CD8-positive, alpha-beta memory T cell (primary cell): ENCODE measurements at regions of chr11 and their contacts with region 1.

Region 1: GRCh38 chr11:67239783-67240575 is 26.3 kb upstream of the GRK2 start:
- DNase-seq: peak; percentile 94 to 98 (median 97)
- H3K4me3 ChIP-seq: peak overlapping the region; percentile 98
- H3K4me3 Mint-ChIP-seq: peak overlapping the region; percentile 94 to 100 (median 99)
- H3K27ac ChIP-seq: peak overlapping the region; percentile 99
- H3K27ac Mint-ChIP-seq: peak overlapping the region; percentile 97 to 100 (median 99)
- H3K4me1 ChIP-seq: peaks cover 48% of the 10 kb centered on the region
- H3K4me1 Mint-ChIP-seq: peaks cover 50 to 58% (median 57%) of the 10 kb centered on the region in 3 donors
- H3K27me3 ChIP-seq: no peaks in the 10 kb centered on the region
- H3K27me3 Mint-ChIP-seq: peaks cover 0 to 4% of the 10 kb centered on the region in 2 donors

Region 2: DNA sequence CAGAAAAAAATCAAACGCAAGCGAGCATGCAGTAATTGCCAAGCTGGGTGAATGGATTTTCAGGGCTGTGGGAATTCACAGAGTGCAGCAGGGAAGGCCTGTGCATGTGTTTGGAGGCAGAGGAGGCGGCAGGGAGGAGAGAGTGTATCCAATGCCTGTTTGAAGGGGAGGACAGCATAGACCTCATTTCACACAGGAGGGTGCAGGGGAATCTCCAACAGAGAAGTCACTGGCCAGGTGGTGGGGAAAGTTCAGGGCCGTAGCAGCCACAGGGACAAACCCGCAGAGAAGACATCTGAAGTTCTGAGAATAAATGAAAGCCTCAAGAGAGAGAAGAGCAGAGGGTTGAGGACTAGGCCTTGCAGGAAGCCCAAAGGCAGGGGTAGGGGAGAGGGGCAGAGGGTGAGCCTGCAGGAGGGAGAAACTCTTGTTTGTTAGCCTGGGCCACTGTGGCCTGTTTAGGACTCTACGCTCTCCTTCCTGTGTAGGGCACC is 140.1 kb before region 1 on chr11:
- CTCF ChIA-PET with region 1: no interaction called
- POLR2A ChIA-PET with region 1: no interaction called
- DNase-seq: no peak
- H3K4me3 ChIP-seq: no peak overlapping the region
- H3K4me3 Mint-ChIP-seq: no peak overlapping the region
- H3K27ac ChIP-seq: no peak overlapping the region
- H3K27ac Mint-ChIP-seq: peak overlapping the region; percentile 35 to 86 (median 60)
- H3K4me1 ChIP-seq: peaks cover 14% of the 10 kb centered on the region
- H3K4me1 Mint-ChIP-seq: peaks cover 13 to 22% (median 16%) of the 10 kb centered on the region in 3 donors
- H3K27me3 ChIP-seq: no peaks in the 10 kb centered on the region
- H3K27me3 Mint-ChIP-seq: no peaks in the 10 kb centered on the region

Region 3: DNA sequence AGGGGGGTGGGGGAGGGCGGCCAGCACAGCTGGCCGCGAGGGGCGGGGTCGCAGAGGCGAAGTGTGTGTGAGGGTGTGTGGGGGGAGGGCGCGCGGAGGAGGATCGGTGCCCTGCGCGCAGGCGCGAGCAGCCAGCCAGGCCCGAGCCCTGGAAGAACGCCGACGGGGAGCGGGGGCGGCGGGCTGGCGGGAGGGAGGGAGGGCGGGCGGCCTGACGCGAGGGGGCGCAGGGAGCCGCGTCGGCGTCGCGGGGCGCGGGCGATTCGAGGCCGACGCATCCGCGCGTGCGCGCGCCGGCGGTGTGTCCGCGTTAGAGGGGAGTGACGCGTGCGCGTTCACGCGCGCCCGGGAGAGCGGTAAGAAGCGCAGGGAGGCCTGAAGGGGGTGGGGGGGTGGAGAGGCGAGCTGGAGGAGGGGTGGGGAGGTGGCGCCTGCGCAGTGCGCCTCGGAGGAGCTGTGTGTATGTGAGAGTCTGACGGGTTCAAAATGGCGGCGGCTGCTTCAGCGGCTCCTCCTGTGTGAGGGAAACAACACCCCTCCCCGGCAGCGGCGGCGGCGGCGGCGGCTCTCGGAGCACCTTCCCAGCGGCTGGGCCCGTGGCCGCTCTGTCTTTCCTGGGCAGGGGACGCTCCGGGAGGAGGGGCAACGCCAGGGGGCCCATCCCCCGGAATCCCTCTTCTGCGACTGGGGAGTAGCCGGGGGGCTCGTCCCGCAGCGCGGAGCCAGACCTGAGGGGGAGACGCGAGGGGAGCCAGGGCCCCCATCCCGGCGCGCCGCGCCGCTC is 121.0 kb before region 1 on chr11 and contains the start of gene KDM2A:
- CTCF ChIA-PET with region 1: interaction called, 8 read pairs
- POLR2A ChIA-PET with region 1: interaction called, 18 read pairs
- DNase-seq: peak; percentile 97 to 100 (median 99)
- H3K4me3 ChIP-seq: peak within 1 kb of the TSS; percentile 94
- H3K4me3 Mint-ChIP-seq: peak within 1 kb of the TSS; percentile 91 to 99 (median 97)
- H3K27ac ChIP-seq: peak within 1 kb of the TSS; percentile 78
- H3K27ac Mint-ChIP-seq: peak within 1 kb of the TSS; percentile 82 to 98 (median 96)
- H3K4me1 ChIP-seq: peaks cover 23% of the 10 kb centered on the region
- H3K4me1 Mint-ChIP-seq: peaks cover 25 to 49% (median 35%) of the 10 kb centered on the region in 3 donors
- H3K27me3 ChIP-seq: no peaks in the 10 kb centered on the region
- H3K27me3 Mint-ChIP-seq: no peaks in the 10 kb centered on the region
- total RNA-seq, gene KDM2A: 101 to 107 TPM

Region 4: GRCh38 chr11:67136156-67136555 is 103.8 kb before region 1 on chr11:
- CTCF ChIA-PET with region 1: no interaction called
- POLR2A ChIA-PET with region 1: no interaction called
- DNase-seq: no peak
- H3K4me3 ChIP-seq: no peak overlapping the region
- H3K4me3 Mint-ChIP-seq: no peak overlapping the region
- H3K27ac ChIP-seq: no peak overlapping the region
- H3K27ac Mint-ChIP-seq: peak overlapping the region in 2 of 8 donors; percentile 8 to 35
- H3K4me1 ChIP-seq: no peaks in the 10 kb centered on the region
- H3K4me1 Mint-ChIP-seq: peaks cover 28 to 58% (median 49%) of the 10 kb centered on the region in 3 donors
- H3K27me3 ChIP-seq: no peaks in the 10 kb centered on the region
- H3K27me3 Mint-ChIP-seq: no peaks in the 10 kb centered on the region

Region 5: GRCh38 chr11:67252831-67253239 is 12.9 kb after region 1 on chr11:
- CTCF ChIA-PET with region 1: interaction called, 5 read pairs
- POLR2A ChIA-PET with region 1: interaction called, 15 read pairs
- DNase-seq: peak in 1 of 5 donors; percentile 46
- H3K4me3 ChIP-seq: no peak overlapping the region
- H3K4me3 Mint-ChIP-seq: peak overlapping the region in 1 of 7 donors; percentile 41
- H3K27ac ChIP-seq: no peak overlapping the region
- H3K27ac Mint-ChIP-seq: peak overlapping the region in 7 of 8 donors; percentile 11 to 76 (median 67)
- H3K4me1 ChIP-seq: peaks cover 20% of the 10 kb centered on the region
- H3K4me1 Mint-ChIP-seq: peaks cover 13 to 58% (median 34%) of the 10 kb centered on the region in 3 donors
- H3K27me3 ChIP-seq: no peaks in the 10 kb centered on the region
- H3K27me3 Mint-ChIP-seq: peaks cover 0 to 4% of the 10 kb centered on the region in 2 donors

Region 6: DNA sequence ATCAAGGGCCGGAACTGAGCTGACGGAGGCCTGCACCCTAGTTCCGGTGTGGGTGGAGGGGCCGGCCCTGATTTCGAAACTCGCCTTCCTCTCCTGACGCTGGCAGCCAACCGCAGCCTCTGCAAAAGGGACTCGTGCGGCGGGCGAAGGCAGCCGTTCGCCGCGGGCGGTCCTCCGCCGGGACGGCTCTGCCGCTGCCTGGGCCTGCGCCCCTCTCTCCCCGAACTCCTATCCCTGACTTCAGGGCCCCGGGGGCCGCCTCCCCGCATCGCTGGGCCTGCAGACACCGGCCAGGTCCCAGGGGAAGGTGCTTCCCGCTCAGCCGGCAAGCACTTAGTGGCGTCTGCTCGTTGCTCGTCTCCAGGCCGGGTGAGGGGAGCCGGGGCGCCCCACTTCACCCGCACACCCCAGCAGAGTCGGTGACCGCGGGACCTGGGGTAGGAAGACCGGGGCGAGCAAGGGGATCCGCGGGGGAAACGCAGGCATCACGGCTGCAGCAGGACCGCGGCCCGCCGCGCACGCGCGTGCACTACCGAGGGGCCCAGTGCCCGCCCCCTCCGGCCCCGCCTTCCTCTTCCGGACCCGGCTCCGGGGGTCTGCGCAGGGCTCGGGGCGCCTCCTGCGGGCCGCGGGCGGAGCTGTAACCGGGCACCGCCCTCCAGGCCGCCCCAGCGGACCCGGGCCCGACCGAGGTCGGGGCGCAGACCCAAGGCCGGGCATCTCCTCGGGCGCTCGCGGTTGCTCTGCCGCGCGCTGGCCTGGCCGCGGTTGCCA is 48.7 kb after region 1 on chr11:
- CTCF ChIA-PET with region 1: interaction called, 6 read pairs
- POLR2A ChIA-PET with region 1: interaction called, 17 read pairs
- DNase-seq: peak; percentile 86 to 94 (median 91)
- H3K4me3 ChIP-seq: peak overlapping the region; percentile 92
- H3K4me3 Mint-ChIP-seq: peak overlapping the region; percentile 74 to 91 (median 76)
- H3K27ac ChIP-seq: peak overlapping the region; percentile 88
- H3K27ac Mint-ChIP-seq: peak overlapping the region; percentile 86 to 100 (median 99)
- H3K4me1 ChIP-seq: peaks cover 71% of the 10 kb centered on the region
- H3K4me1 Mint-ChIP-seq: peaks cover 50 to 75% (median 51%) of the 10 kb centered on the region in 3 donors
- H3K27me3 ChIP-seq: no peaks in the 10 kb centered on the region
- H3K27me3 Mint-ChIP-seq: peaks cover 0 to 2% of the 10 kb centered on the region in 2 donors

Region 7: GRCh38 chr11:67366961-67367760 is 127.2 kb after region 1 on chr11:
- CTCF ChIA-PET with region 1: no interaction called
- POLR2A ChIA-PET with region 1: interaction called, 10 read pairs
- DNase-seq: no peak
- H3K4me3 ChIP-seq: no peak overlapping the region
- H3K4me3 Mint-ChIP-seq: no peak overlapping the region
- H3K27ac ChIP-seq: no peak overlapping the region
- H3K27ac Mint-ChIP-seq: peak overlapping the region in 4 of 8 donors; percentile 44 to 80 (median 74)
- H3K4me1 ChIP-seq: peaks cover 58% of the 10 kb centered on the region
- H3K4me1 Mint-ChIP-seq: peaks cover 75 to 92% (median 84%) of the 10 kb centered on the region in 3 donors
- H3K27me3 ChIP-seq: no peaks in the 10 kb centered on the region
- H3K27me3 Mint-ChIP-seq: peaks cover 0 to 3% of the 10 kb centered on the region in 2 donors

Region 8: DNA sequence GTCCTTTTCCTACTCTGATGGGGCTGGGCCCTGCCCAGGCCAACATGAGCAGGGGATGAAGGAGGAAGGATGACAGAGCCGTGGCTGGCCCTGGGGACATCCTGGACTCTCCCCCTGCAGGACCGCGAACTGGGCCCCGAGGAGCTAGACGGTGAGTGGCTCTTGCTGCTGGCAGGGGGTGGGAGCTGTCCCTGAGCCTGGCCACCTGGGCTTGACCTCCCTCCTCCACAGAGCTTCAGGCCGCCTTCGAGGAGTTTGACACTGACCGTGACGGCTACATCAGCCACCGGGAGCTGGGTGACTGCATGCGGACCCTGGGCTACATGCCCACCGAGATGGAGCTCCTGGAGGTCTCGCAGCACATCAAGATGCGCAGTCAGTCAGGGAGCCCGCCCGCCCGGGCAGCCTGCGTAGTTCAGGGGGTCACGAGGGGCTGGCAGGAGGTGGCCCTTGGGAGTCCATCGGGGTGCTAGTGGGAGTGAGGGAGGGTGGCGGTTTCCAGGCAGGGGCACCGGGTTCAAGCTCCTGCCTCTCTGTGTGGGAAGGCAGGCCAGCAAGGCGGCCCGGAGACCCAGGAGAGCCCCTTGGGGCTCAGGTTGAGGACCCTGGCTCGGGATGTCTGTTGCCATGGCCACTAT is 216.2 kb after region 1 on chr11:
- CTCF ChIA-PET with region 1: no interaction called
- POLR2A ChIA-PET with region 1: no interaction called
- DNase-seq: no peak
- H3K4me3 ChIP-seq: no peak overlapping the region
- H3K4me3 Mint-ChIP-seq: no peak overlapping the region
- H3K27ac ChIP-seq: no peak overlapping the region
- H3K27ac Mint-ChIP-seq: no peak overlapping the region
- H3K4me1 ChIP-seq: no peaks in the 10 kb centered on the region
- H3K4me1 Mint-ChIP-seq: peaks cover 3 to 8% (median 4%) of the 10 kb centered on the region in 3 donors
- H3K27me3 ChIP-seq: no peaks in the 10 kb centered on the region
- H3K27me3 Mint-ChIP-seq: peaks cover 0 to 3% of the 10 kb centered on the region in 2 donors